ENCODE measurements at regions of chr3 and their contacts with region 1.

Region 1: DNA sequence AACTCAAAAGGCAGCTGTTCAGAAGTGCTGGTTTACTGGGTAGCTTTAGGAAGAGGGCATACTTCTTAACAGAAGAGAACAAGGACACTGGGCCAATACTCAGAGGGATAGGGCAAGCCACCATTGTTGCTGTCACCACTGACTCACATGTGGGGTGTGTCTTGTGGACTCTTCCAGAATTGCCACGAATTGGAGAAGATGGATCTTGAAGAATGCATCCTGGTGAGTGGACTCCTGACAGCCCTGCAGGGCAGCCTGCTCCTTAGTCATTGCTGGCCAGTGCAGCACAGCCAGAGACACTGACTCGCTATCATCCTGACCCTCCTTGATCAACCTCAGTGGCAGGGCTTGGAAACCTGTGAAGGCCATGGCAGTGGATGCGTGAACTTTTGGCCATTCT is 62.3 kb downstream of the UBP1 start:
- DNase-seq: peak; percentile 69
- H3K4me3 ChIP-seq: no peak overlapping the region
- H3K27ac ChIP-seq: no peak overlapping the region
- H3K4me1 ChIP-seq: peaks cover 2% of the 10 kb centered on the region
- H3K27me3 ChIP-seq: no peaks in the 10 kb centered on the region
- CTCF ChIP-seq: no peak

Region 2: DNA sequence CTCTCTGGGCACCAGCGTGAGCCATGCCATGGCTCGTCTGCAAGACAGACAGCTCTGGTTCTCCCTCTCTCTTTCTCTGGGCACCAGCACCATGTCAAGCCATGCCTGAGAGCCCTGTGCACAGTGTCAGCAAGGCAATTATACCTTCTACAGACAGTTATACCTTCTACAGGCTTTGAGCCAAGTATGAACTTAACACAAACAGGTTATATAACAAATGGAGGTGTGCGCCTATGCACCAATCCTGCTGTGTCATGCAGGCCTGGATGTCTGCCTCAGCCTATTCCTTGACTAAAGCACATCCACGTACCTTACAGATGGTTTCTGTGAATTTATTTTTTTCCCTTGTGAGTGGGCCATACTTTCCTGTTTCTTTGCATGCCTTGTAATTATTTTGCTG is 106.6 kb before region 1 on chr3:
- CTCF ChIA-PET with region 1: no interaction called
- dilution Hi-C with region 1: loop called (anchors 5 kb)
- in situ Hi-C with region 1: no loop called
- intact Hi-C with region 1: no loop called
- DNase-seq: no peak
- H3K4me3 ChIP-seq: no peak overlapping the region
- H3K27ac ChIP-seq: no peak overlapping the region
- H3K4me1 ChIP-seq: no peaks in the 10 kb centered on the region
- H3K27me3 ChIP-seq: no peaks in the 10 kb centered on the region
- CTCF ChIP-seq: no peak

Measured in mammary epithelial cell (primary cell).